Naive thymus-derived CD4-positive, alpha-beta T cell (primary cell): ENCODE measurements at regions of chr3 and their contacts with region 1.

Region 1: DNA sequence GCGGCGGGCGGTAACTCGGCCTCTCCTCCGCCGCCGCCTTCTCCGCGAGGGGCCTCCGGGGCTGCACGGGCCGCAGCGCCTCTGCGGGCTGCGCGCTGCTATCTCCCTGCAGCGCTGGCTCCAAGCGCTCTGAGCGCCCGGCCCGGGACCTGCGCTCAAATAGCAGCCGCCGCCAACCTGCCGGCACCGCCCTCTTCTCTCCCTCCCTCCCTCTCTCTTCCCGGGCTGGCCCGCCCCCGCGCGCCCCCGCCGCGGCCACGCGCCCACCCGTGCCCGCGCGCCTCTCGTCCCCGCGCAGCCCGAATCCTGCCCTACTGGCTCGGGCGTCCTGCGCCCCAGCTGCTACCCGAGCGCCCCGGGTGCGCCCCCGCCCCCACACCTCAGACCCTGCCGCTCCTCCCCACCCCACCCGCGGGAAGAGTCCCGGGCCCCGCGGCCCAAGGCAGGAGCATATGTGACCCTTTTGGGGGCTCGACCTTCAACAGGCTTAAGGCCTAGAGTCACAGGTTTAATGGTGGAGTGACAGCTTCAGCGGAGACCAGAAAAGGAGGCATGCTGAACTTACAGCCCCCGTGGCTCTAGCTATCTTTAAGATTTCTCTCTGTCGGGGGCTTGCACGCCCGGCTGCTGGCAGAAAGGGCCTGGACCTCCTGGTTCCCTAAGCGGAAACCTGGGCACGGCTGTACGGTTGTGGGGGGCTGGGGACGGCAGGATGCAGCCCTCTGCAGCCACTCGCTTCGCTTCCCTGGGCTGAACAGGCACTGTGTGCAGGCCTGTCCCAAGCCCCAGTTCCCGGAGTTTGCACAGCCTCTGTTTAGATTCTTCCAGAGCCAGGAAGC is at the start of gene CACNA2D2:
- DNase-seq: peak; percentile 54 to 79 (median 74)
- ATAC-seq: peak; percentile 94
- H3K4me3 ChIP-seq: peak within 1 kb of the TSS; percentile 44
- H3K4me3 Mint-ChIP-seq: peak within 1 kb of the TSS; percentile 37 to 85 (median 76)
- H3K27ac ChIP-seq: peak within 1 kb of the TSS; percentile 45
- H3K27ac Mint-ChIP-seq: peak within 1 kb of the TSS in 5 of 9 donors; percentile 19 to 71 (median 43)
- H3K4me1 ChIP-seq: peaks cover 0 to 5% of the 10 kb centered on the region in 2 donors
- H3K4me1 Mint-ChIP-seq: peaks cover 0 to 15% (median 10%) of the 10 kb centered on the region in 7 donors
- H3K27me3 ChIP-seq: peaks cover 0 to 5% of the 10 kb centered on the region in 2 donors
- H3K27me3 Mint-ChIP-seq: peaks cover 11 to 56% (median 21%) of the 10 kb centered on the region in 5 donors
- total RNA-seq, gene CACNA2D2: 0.97 to 6.2 (median 2.5) TPM

Region 2: GRCh38 chr3:50450209-50450921 is 53.4 kb before region 1 on chr3:
- CTCF ChIA-PET with region 1: no interaction called
- POLR2A ChIA-PET with region 1: interaction called, 5 read pairs
- intact Hi-C with region 1: loop called in 1 of 2 experiments (anchors 1 kb)
- DNase-seq: peak; percentile 57 to 75 (median 66)
- ATAC-seq: peak; percentile 86
- H3K4me3 ChIP-seq: peak overlapping the region; percentile 60
- H3K4me3 Mint-ChIP-seq: peak overlapping the region; percentile 82 to 91 (median 86)
- H3K27ac ChIP-seq: peak overlapping the region; percentile 81
- H3K27ac Mint-ChIP-seq: peak overlapping the region; percentile 85 to 98 (median 96)
- H3K4me1 ChIP-seq: peaks cover 13 to 16% of the 10 kb centered on the region in 2 donors
- H3K4me1 Mint-ChIP-seq: peaks cover 10 to 33% (median 28%) of the 10 kb centered on the region in 7 donors
- H3K27me3 ChIP-seq: no peaks in the 10 kb centered on the region
- H3K27me3 Mint-ChIP-seq: no peaks in the 10 kb centered on the region